Endothelial cell of umbilical vein (primary cell): ENCODE measurements at regions of chr3 and their contacts with region 1.

Region 1: GRCh38 chr3:16828815-16829214 is 55.9 kb upstream of the PLCL2 start:
- DNase-seq: peak; percentile 80
- H3K4me3 ChIP-seq: no peak overlapping the region
- H3K27ac ChIP-seq: peak overlapping the region; percentile 63
- H3K4me1 ChIP-seq: peaks cover 6% of the 10 kb centered on the region
- H3K27me3 ChIP-seq: no peaks in the 10 kb centered on the region
- CTCF ChIP-seq: peak; percentile 63 to 66
- POLR2A ChIP-seq: no peak

Region 2: GRCh38 chr3:16842272-16843270 is 13.8 kb after region 1 on chr3:
- CTCF ChIA-PET with region 1: interaction called, 37 read pairs
- POLR2A ChIA-PET with region 1: no interaction called
- dilution Hi-C with region 1: no loop called
- intact Hi-C with region 1: no loop called
- DNase-seq: no peak
- H3K4me3 ChIP-seq: no peak overlapping the region
- H3K27ac ChIP-seq: no peak overlapping the region
- H3K4me1 ChIP-seq: peaks cover 23% of the 10 kb centered on the region
- H3K27me3 ChIP-seq: no peaks in the 10 kb centered on the region
- CTCF ChIP-seq: no peak
- POLR2A ChIP-seq: no peak

Region 3: DNA sequence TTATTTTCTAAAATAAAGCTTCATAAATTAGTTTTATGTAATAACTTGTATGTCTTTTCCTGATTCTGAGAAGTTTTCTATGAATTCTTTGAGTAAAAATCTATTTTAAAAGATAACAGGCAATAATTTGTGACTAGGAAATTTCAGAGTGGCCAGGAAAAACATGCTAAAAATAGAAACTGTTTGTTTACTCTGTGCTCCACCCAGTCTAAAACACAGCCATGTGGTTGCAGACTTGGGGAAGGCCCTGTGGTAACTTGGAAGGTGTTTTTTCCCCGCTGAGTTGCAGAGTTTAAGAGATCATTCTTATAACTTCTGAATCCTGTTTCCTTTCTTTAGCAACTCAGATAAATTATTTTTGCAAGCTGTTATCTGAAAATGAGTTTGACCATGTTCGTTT is 77.9 kb after region 1 on chr3:
- CTCF ChIA-PET with region 1: interaction called, 20 read pairs
- POLR2A ChIA-PET with region 1: no interaction called
- dilution Hi-C with region 1: no loop called
- intact Hi-C with region 1: no loop called
- DNase-seq: peak; percentile 65
- H3K4me3 ChIP-seq: no peak overlapping the region
- H3K27ac ChIP-seq: peak overlapping the region; percentile 78
- H3K4me1 ChIP-seq: peaks cover 34% of the 10 kb centered on the region
- H3K27me3 ChIP-seq: no peaks in the 10 kb centered on the region
- CTCF ChIP-seq: no peak
- POLR2A ChIP-seq: no peak

Region 4: DNA sequence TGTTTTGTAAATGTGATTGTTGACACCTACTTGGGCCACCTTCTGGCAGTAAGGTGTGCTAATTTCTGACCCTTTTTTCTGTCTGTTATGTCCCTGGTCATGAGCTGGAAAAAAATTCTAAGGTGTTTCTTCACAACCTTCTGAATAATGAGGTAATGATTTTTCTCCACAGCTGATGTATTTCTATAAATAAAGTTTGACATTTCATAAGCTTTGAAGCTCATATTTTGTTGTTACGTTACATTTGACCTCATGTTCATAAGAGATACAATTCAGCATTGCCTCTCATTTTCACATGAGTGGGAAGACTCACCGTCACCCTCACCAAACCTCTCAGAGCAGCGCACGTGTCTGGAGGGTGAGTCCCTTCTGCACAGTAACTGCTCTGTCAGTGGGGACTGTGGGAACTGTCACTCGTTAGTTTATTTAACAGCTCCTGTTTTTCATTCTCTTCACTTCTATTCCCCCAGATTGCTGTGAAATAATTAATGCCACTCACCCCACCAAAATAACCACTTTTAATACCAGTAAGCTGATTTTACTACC is 196.9 kb after region 1 on chr3:
- CTCF ChIA-PET with region 1: interaction called, 17 read pairs
- POLR2A ChIA-PET with region 1: no interaction called
- dilution Hi-C with region 1: no loop called
- intact Hi-C with region 1: no loop called
- DNase-seq: no peak
- H3K4me3 ChIP-seq: no peak overlapping the region
- H3K27ac ChIP-seq: no peak overlapping the region
- H3K4me1 ChIP-seq: no peaks in the 10 kb centered on the region
- H3K27me3 ChIP-seq: no peaks in the 10 kb centered on the region
- CTCF ChIP-seq: no peak
- POLR2A ChIP-seq: no peak

Region 5: DNA sequence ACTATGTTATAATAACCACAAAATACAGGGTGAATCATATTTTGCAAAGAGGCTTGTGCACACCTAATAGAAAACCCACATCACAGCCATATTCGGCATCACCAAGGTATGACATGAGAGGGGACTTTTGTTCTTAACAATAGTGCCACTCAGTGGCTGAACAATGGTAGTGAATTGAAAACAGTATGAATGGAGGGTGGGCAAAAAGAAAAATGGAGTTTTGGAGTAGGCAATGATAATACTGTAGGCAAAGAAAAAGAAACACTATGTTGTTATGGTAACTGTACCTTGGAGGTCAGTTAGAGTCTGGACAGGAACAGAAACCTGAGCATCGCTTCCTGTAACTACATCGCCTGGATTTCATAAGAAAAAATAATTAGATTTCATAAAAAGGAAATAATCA is 404.6 kb after region 1 on chr3:
- CTCF ChIA-PET with region 1: interaction called, 65 read pairs
- POLR2A ChIA-PET with region 1: no interaction called
- dilution Hi-C with region 1: no loop called
- intact Hi-C with region 1: loop called (anchors 1 kb)
- DNase-seq: peak; percentile 74
- H3K4me3 ChIP-seq: no peak overlapping the region
- H3K27ac ChIP-seq: no peak overlapping the region
- H3K4me1 ChIP-seq: peaks cover 10% of the 10 kb centered on the region
- H3K27me3 ChIP-seq: no peaks in the 10 kb centered on the region
- CTCF ChIP-seq: peak; percentile 39 to 48
- POLR2A ChIP-seq: no peak

Region 6: GRCh38 chr3:17478673-17479072 is 649.9 kb after region 1 on chr3:
- CTCF ChIA-PET with region 1: no interaction called
- POLR2A ChIA-PET with region 1: no interaction called
- dilution Hi-C with region 1: no loop called
- intact Hi-C with region 1: no loop called
- DNase-seq: no peak
- H3K4me3 ChIP-seq: no peak overlapping the region
- H3K27ac ChIP-seq: no peak overlapping the region
- H3K4me1 ChIP-seq: no peaks in the 10 kb centered on the region
- H3K27me3 ChIP-seq: no peaks in the 10 kb centered on the region
- CTCF ChIP-seq: no peak
- POLR2A ChIP-seq: no peak

Region 7: GRCh38 chr3:17841190-17841828 is 1012.5 kb after region 1 on chr3:
- CTCF ChIA-PET with region 1: interaction called, 15 read pairs
- POLR2A ChIA-PET with region 1: no interaction called
- dilution Hi-C with region 1: no loop called
- intact Hi-C with region 1: no loop called
- DNase-seq: peak; percentile 64
- H3K4me3 ChIP-seq: no peak overlapping the region
- H3K27ac ChIP-seq: no peak overlapping the region
- H3K4me1 ChIP-seq: no peaks in the 10 kb centered on the region
- H3K27me3 ChIP-seq: peaks cover 0 to under 1% of the 10 kb centered on the region in 2 experiments
- CTCF ChIP-seq: peak; percentile 96
- POLR2A ChIP-seq: no peak